Lower leg skin (tissue), 4 donors: ENCODE measurements at regions of chr14 and their contacts with region 1.

Region 1: DNA sequence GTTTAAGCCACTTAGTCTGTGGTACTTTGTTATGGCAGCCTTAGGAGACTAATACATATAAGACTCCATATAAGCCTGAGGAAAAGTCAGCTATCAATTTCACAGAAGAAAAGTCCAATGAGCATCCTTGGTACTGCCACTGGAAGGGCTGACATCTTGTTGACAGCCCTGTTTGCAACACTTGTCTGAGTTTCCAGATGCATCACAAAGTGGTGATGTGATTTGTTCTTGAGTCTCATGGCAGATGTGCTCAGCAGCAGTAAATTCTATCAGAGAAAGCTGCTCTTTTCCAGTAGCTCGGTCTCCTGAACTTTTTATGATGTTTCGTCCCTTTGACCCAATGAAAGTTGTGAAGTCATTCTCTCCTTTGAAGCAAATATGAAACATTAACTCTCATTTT is 54.3 kb downstream of the STON2 start:
- DNase-seq: no peak
- H3K4me3 ChIP-seq: no peak overlapping the region
- CTCF ChIP-seq: no peak
- POLR2A ChIP-seq: no peak

Region 2: GRCh38 chr14:81331229-81332021 is 14.4 kb before region 1 on chr14:
- intact Hi-C with region 1: loop called (anchors 2 kb)
- DNase-seq: no peak
- H3K4me3 ChIP-seq: no peak overlapping the region
- CTCF ChIP-seq: no peak
- POLR2A ChIP-seq: no peak